Mammary epithelial cell (primary cell): ENCODE measurements at regions of chr5 and their contacts with region 1.

Region 1: DNA sequence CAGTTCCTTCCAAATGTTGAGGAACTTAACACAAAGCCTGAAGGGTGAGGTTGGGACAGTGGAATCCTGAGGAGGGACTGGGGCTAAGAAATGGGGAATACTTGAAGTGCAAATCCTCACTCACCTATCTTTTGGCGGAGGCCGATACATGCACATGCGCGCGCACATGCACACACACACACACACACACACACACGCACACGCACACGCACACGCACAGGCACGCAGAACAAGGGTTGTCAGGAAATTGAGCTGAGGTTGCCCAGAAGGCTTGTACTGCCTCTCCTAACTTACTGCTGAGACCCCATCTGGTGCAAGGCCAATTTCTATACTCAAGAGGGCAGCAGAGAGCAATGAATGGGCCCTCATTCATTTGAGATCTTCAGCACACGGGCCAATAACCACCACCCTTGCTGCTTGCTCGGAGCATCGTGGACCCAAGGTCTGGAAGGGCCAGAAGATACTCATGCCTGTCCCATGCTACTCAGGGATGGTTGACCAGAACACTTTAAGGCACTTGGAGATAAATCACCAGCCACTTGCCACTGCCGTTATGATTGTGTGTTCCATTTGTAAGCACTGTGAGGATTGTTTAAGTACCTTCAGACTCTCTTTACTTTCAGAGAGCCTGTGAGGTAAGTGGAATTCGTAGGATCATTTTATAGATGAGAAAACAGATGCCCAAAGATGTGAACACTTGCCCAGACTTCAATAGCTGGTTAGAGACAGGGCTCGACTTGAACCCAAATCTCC is 21.5 kb downstream of the BTF3 start:
- DNase-seq: peak; percentile 81
- H3K4me3 ChIP-seq: no peak overlapping the region
- H3K27ac ChIP-seq: no peak overlapping the region
- H3K4me1 ChIP-seq: peaks cover 11% of the 10 kb centered on the region
- H3K27me3 ChIP-seq: no peaks in the 10 kb centered on the region
- CTCF ChIP-seq: peak; percentile 83 to 87

Region 2: DNA sequence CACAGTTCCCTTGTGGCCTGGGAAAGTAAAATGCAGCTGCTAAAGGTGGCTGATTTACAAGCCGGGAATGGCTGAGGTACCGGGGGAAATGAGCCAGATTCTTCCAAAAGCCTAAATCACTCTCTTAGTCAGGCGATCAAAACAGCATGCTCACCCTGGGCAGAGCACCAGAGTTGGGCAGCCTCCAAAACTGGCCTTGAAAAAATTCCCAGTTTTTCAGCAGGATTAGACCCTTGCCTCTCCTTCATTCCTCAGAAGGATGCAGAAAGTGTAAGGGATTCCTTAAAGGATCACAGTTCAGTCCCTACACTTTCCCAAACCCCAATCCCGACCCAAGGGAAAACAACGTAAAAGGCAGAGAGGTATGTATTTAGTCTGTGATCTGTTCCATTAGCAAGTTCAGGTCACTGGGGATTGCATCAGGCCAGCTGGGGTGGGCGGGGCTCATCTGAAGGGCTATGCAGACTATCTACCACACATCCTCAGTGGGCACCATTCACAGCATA is 329.8 kb before region 1 on chr5:
- CTCF ChIA-PET with region 1: interaction called, 16 read pairs
- dilution Hi-C with region 1: no loop called
- in situ Hi-C with region 1: no loop called
- intact Hi-C with region 1: no loop called
- DNase-seq: no peak
- H3K4me3 ChIP-seq: no peak overlapping the region
- H3K27ac ChIP-seq: no peak overlapping the region
- H3K4me1 ChIP-seq: no peaks in the 10 kb centered on the region
- H3K27me3 ChIP-seq: peaks cover 2% of the 10 kb centered on the region
- CTCF ChIP-seq: no peak

Region 3: DNA sequence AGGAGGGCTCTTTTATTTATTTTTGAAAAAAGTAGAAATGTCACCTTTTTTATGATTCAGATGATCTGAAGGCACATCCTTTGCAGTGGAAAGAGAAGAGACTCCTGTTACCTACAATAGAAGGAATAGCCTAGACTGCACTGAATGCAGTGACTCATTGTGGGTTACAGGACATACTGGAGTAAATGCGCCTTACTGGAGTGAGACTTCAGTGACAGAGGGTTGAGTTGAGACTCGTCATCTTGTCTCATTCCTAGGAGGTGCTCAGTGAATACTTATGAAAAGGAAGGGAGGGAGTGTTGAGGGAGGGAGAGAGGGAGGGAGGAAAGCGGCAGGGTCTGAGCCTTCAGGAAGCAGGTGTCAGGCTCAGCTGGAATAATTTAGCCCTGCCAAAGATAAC is 20.5 kb after region 1 on chr5:
- CTCF ChIA-PET with region 1: no interaction called
- dilution Hi-C with region 1: no loop called
- in situ Hi-C with region 1: no loop called
- intact Hi-C with region 1: loop called (anchors 1 kb)
- DNase-seq: peak; percentile 94
- H3K4me3 ChIP-seq: no peak overlapping the region
- H3K27ac ChIP-seq: no peak overlapping the region
- H3K4me1 ChIP-seq: peaks cover 45% of the 10 kb centered on the region
- H3K27me3 ChIP-seq: no peaks in the 10 kb centered on the region
- CTCF ChIP-seq: no peak

Region 4: GRCh38 chr5:73565139-73565968 is 45.6 kb after region 1 on chr5 and contains the starts of genes ANKRA2 and UTP15:
- CTCF ChIA-PET with region 1: interaction called, 5 read pairs
- dilution Hi-C with region 1: no loop called
- in situ Hi-C with region 1: no loop called
- intact Hi-C with region 1: loop called (anchors 2 kb)
- DNase-seq: peak; percentile 97
- H3K4me3 ChIP-seq: peak within 1 kb of the TSS; percentile 82 to 95 (median 85)
- H3K27ac ChIP-seq: peak within 1 kb of the TSS; percentile 88
- H3K4me1 ChIP-seq: peaks cover 11% of the 10 kb centered on the region
- H3K27me3 ChIP-seq: no peaks in the 10 kb centered on the region
- CTCF ChIP-seq: no peak
- total RNA-seq, gene ANKRA2: 17.5 to 25.3 TPM
- total RNA-seq, gene UTP15: 38.7 to 41.5 TPM

Region 5: GRCh38 chr5:73792687-73793320 is 273.1 kb after region 1 on chr5:
- CTCF ChIA-PET with region 1: interaction called, 5 read pairs
- dilution Hi-C with region 1: no loop called
- in situ Hi-C with region 1: no loop called
- intact Hi-C with region 1: loop called (anchors 1 kb)
- DNase-seq: peak; percentile 61
- H3K4me3 ChIP-seq: no peak overlapping the region
- H3K27ac ChIP-seq: no peak overlapping the region
- H3K4me1 ChIP-seq: peaks cover 35% of the 10 kb centered on the region
- H3K27me3 ChIP-seq: no peaks in the 10 kb centered on the region
- CTCF ChIP-seq: peak; percentile 97 to 99

Region 6: DNA sequence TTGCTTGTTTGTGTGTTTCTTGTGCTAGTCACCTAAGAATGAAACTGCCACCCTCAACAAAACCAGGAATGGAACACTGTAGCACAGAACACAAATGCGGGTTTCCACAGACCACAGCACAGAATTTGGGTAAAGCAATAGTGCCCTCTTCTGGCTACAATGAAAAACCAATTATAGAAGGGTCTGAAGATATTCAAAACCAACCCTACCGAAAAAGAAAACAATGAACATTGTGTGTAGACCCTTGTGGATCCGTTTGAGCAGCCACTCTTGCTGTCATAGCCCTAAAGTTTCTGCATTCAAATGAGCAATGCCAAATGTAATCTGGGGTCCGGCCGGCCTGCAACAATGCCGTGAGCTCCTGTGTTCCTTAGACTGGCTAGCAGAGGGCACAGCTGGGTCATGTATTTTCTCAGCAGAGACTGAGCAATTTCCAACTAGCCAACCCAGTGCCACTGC is 1129.2 kb after region 1 on chr5:
- CTCF ChIA-PET with region 1: no interaction called
- dilution Hi-C with region 1: no loop called
- in situ Hi-C with region 1: no loop called
- intact Hi-C with region 1: loop called (anchors 5 kb)
- DNase-seq: no peak
- H3K4me3 ChIP-seq: no peak overlapping the region
- H3K27ac ChIP-seq: no peak overlapping the region
- H3K4me1 ChIP-seq: peaks cover 55% of the 10 kb centered on the region
- H3K27me3 ChIP-seq: no peaks in the 10 kb centered on the region
- CTCF ChIP-seq: peak; percentile 65 to 66